Prostate gland (tissue), 2 donors: ENCODE measurements at regions of chr19 and their contacts with region 1.

Region 1: GRCh38 chr19:18464646-18465045 is 26.7 kb upstream of the ISYNA1 start:
- DNase-seq: peak; percentile 94
- H3K4me3 ChIP-seq: no peak overlapping the region
- H3K27ac ChIP-seq: peak overlapping the region; percentile 74
- H3K4me1 ChIP-seq: peaks cover 20% of the 10 kb centered on the region
- H3K27me3 ChIP-seq: no peaks in the 10 kb centered on the region
- CTCF ChIP-seq: peak in 2 of 4 experiments; percentile 5
- POLR2A ChIP-seq: peak; percentile 39

Region 2: DNA sequence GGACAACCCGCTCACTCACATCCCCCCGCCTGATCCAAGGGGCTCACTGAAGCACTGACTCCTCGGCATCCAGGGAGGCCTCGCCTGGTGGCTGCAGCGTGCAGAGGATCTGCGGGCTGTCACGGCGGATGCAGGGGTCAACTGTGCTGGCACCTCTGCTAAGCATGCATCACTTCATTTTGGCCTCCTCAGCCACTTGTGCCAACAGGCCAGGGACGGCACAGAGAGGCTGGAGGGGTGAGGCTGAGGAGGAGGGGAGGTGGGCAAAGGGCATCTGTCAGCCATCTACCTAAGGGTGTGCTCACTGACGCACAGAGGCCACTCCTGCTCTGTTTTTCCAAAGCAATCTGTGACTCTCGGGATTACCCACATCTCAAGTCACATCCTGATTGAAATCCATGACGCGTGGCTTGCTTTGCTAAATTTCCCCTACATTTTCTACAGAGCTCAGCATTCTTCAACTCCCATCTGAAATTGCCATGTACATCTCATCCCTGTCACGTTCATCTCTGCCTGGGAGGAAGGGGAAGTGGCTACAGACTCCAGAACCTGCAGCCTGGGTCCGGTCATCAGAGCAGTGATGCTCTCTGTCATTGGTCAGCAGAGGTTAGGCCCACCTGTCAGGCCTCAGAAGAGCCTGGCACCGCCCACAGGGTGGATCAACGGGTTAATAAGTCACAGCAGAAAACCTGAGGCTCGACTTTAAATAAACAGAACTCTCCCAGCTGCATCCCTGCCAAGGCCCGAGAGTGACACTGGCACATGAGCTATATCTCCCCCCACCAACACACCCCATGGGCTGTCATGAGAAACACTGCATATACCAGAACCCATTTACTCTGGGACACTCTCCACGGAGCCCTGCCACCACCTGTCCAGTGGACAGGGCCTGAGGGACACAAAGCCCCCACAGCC is 39.6 kb after region 1 on chr19:
- intact Hi-C with region 1: loop called (anchors 5 kb)
- DNase-seq: no peak
- H3K4me3 ChIP-seq: no peak overlapping the region
- H3K27ac ChIP-seq: no peak overlapping the region
- H3K4me1 ChIP-seq: peaks cover 16% of the 10 kb centered on the region
- H3K27me3 ChIP-seq: no peaks in the 10 kb centered on the region
- CTCF ChIP-seq: no peak
- POLR2A ChIP-seq: no peak

Region 3: DNA sequence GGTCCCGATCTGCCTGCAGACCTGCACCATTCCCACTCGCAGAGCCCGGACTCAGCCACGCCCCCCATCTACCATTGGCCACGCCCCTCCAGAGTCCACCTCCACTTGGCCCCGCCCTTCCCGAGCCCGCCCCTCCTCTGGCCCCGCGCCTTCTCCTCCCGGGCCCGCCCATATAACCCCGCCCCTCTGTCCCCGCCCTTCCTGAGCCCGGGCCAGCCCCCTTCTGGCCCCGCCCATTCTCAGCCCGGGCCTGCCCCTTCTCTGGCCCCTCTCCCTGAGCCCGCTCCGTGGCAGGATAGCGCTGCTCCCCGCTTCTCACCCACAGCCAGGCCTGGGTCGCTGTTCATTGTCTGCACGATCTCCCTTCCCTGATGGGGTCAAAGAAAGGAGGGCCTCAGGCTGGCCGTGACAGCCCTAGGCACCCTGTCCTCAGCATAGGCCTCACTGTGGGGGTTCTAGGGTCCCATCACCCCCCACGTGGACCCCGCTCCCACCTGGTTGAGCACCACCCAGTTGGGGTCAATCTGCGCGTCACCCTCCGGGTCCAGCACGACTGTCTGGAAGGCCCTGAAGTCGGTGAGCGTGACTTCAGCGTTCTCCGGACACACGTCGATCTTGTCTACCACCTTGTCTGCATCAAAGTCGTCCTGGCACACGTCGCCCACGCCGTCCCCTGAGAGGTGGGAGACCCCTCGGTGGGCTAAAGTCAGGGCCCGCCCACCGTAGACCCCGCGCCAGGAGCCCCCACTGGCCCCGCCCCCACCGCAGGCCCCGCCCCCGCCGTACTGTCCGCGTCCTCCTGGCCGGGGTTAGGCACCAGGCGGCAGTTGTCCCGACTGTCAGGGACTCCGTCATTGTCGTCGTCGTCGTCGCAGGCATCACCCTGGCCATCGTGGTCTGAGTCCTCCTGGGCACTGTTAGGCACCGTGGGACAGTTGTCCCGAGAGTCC is 320.8 kb after region 1 on chr19:
- intact Hi-C with region 1: no loop called
- DNase-seq: peak; percentile 40
- H3K4me3 ChIP-seq: no peak overlapping the region
- H3K27ac ChIP-seq: no peak overlapping the region
- H3K4me1 ChIP-seq: no peaks in the 10 kb centered on the region
- H3K27me3 ChIP-seq: peaks cover 27% of the 10 kb centered on the region
- CTCF ChIP-seq: no peak
- POLR2A ChIP-seq: no peak